Transverse colon (tissue), 4 donors: ENCODE measurements at regions of chr5 and their contacts with region 1.

Region 1: DNA sequence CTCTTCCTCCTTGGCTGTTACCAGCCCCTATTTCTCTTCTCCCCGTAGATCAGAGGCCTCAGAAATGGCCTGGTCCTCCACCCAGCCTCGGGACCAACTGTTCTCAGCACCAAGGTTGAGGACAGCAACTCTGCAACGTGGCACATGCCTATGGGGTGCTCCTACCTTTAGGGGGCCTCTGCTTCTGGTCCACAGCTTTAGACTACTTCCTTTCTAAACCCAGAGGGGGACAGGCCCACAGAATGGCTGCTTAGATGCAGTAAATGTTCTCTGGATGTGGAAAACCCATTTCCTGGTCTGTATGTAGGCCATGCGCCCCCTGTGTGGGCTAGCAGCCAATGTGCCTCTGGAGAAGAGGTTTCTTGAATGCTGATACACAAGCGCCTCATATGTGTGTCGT is 68.4 kb downstream of the NRG2 start:
- DNase-seq: no peak
- H3K4me3 ChIP-seq: no peak overlapping the region
- H3K27ac ChIP-seq: no peak overlapping the region
- H3K4me1 ChIP-seq: no peaks in the 10 kb centered on the region
- H3K27me3 ChIP-seq: no peaks in the 10 kb centered on the region
- CTCF ChIP-seq: no peak
- EP300 ChIP-seq: no peak
- POLR2A ChIP-seq: no peak

Region 2: GRCh38 chr5:140010798-140011197 is 36.1 kb after region 1 on chr5:
- in situ Hi-C with region 1: no loop called
- intact Hi-C with region 1: loop called (anchors 1 kb)
- DNase-seq: no peak
- H3K4me3 ChIP-seq: no peak overlapping the region
- H3K27ac ChIP-seq: no peak overlapping the region
- H3K4me1 ChIP-seq: no peaks in the 10 kb centered on the region
- H3K27me3 ChIP-seq: peaks cover 21% of the 10 kb centered on the region
- CTCF ChIP-seq: no peak
- EP300 ChIP-seq: no peak
- POLR2A ChIP-seq: no peak